CD4-positive, alpha-beta T cell (primary cell): ENCODE measurements at regions of chr17 and their contacts with region 1.

Region 1: GRCh38 chr17:2786176-2786881 is 9.9 kb upstream of the RAP1GAP2 start:
- DNase-seq: peak; percentile 81 to 95 (median 88)
- ATAC-seq: peak; percentile 98
- H3K4me3 ChIP-seq: no peak overlapping the region
- H3K4me3 Mint-ChIP-seq: no peak overlapping the region
- H3K27ac ChIP-seq: no peak overlapping the region
- H3K27ac Mint-ChIP-seq: no peak overlapping the region
- H3K4me1 ChIP-seq: peaks cover 26% of the 10 kb centered on the region
- H3K4me1 Mint-ChIP-seq: peaks cover 23% of the 10 kb centered on the region
- H3K27me3 ChIP-seq: no peaks in the 10 kb centered on the region
- H3K27me3 Mint-ChIP-seq: no peaks in the 10 kb centered on the region
- CTCF ChIP-seq: peak; percentile 88

Region 2: DNA sequence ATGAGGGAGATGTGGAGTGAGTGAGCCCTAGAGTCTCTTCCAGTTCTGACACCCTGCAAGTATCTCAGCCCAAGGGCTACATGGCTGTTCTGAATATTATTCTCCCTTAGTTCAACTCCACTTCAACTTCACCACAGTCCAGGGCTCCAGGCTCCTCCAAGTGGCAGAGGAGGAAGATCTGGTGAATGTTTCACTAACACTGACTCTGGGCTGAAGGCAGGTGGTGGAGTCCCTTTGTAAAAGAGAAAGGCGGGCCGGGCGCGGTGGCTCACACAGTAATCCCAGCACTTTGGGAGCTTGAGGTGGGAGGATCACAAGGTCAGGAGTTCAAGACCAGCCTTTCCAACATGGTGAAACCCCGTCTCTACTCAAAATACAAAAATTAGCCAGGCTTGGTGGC is 50.4 kb before region 1 on chr17:
- CTCF ChIA-PET with region 1: no interaction called
- POLR2A ChIA-PET with region 1: no interaction called
- intact Hi-C with region 1: no loop called
- DNase-seq: no peak
- ATAC-seq: no peak
- H3K4me3 ChIP-seq: no peak overlapping the region
- H3K4me3 Mint-ChIP-seq: no peak overlapping the region
- H3K27ac ChIP-seq: no peak overlapping the region
- H3K27ac Mint-ChIP-seq: no peak overlapping the region
- H3K4me1 ChIP-seq: no peaks in the 10 kb centered on the region
- H3K4me1 Mint-ChIP-seq: no peaks in the 10 kb centered on the region
- H3K27me3 ChIP-seq: peaks cover 0 to 3% of the 10 kb centered on the region in 2 experiments
- H3K27me3 Mint-ChIP-seq: peaks cover 5% of the 10 kb centered on the region
- CTCF ChIP-seq: no peak

Region 3: GRCh38 chr17:2809337-2809736 is 23.0 kb after region 1 on chr17:
- CTCF ChIA-PET with region 1: interaction called, 45 read pairs
- POLR2A ChIA-PET with region 1: interaction called, 213 read pairs
- intact Hi-C with region 1: loop called (anchors 2 kb)
- DNase-seq: no peak
- ATAC-seq: no peak
- H3K4me3 ChIP-seq: no peak overlapping the region
- H3K4me3 Mint-ChIP-seq: no peak overlapping the region
- H3K27ac ChIP-seq: no peak overlapping the region
- H3K27ac Mint-ChIP-seq: no peak overlapping the region
- H3K4me1 ChIP-seq: peaks cover 33% of the 10 kb centered on the region
- H3K4me1 Mint-ChIP-seq: peaks cover 27% of the 10 kb centered on the region
- H3K27me3 ChIP-seq: no peaks in the 10 kb centered on the region
- H3K27me3 Mint-ChIP-seq: no peaks in the 10 kb centered on the region
- CTCF ChIP-seq: no peak

Region 4: DNA sequence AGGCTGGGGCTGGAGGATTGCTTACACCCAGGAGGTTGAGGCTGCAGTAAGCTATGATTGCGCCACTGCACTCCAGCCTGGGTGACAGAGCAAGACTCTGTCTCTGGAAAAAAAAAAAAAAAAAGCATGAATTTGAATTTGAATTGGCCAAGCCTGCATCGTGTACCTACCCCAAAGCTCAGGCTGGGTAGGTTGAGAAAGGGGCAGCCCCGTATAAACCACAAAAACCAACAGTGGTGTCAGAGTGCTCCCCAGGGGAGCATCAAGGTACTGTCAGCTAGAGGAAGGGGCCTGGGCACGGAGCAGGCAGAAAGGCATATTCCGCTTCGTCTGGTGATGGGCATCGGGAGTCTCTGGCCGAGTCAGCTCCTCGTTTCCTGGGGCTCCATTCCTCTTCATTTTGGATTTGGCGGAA is 50.8 kb after region 1 on chr17:
- CTCF ChIA-PET with region 1: interaction called, 61 read pairs
- POLR2A ChIA-PET with region 1: interaction called, 9 read pairs
- intact Hi-C with region 1: loop called (anchors 1 to 2 kb)
- DNase-seq: peak in 11 of 14 experiments; percentile 14 to 78 (median 43)
- ATAC-seq: peak; percentile 98
- H3K4me3 ChIP-seq: no peak overlapping the region
- H3K4me3 Mint-ChIP-seq: no peak overlapping the region
- H3K27ac ChIP-seq: no peak overlapping the region
- H3K27ac Mint-ChIP-seq: no peak overlapping the region
- H3K4me1 ChIP-seq: peaks cover 7% of the 10 kb centered on the region
- H3K4me1 Mint-ChIP-seq: peaks cover 5% of the 10 kb centered on the region
- H3K27me3 ChIP-seq: no peaks in the 10 kb centered on the region
- H3K27me3 Mint-ChIP-seq: no peaks in the 10 kb centered on the region
- CTCF ChIP-seq: peak; percentile 40

Region 5: GRCh38 chr17:2874189-2874686 is 87.9 kb after region 1 on chr17:
- CTCF ChIA-PET with region 1: no interaction called
- POLR2A ChIA-PET with region 1: no interaction called
- intact Hi-C with region 1: no loop called
- DNase-seq: no peak
- ATAC-seq: no peak
- H3K4me3 ChIP-seq: no peak overlapping the region
- H3K4me3 Mint-ChIP-seq: no peak overlapping the region
- H3K27ac ChIP-seq: no peak overlapping the region
- H3K27ac Mint-ChIP-seq: no peak overlapping the region
- H3K4me1 ChIP-seq: peaks cover 7% of the 10 kb centered on the region
- H3K4me1 Mint-ChIP-seq: peaks cover 6% of the 10 kb centered on the region
- H3K27me3 ChIP-seq: no peaks in the 10 kb centered on the region
- H3K27me3 Mint-ChIP-seq: no peaks in the 10 kb centered on the region
- CTCF ChIP-seq: no peak

Region 6: GRCh38 chr17:2929881-2930533 is 143.7 kb after region 1 on chr17:
- CTCF ChIA-PET with region 1: interaction called, 3 read pairs
- POLR2A ChIA-PET with region 1: interaction called, 3 read pairs
- intact Hi-C with region 1: loop called (anchors 1 to 5 kb)
- DNase-seq: peak in 6 of 14 experiments; percentile 9 to 49 (median 36)
- ATAC-seq: no peak
- H3K4me3 ChIP-seq: no peak overlapping the region
- H3K4me3 Mint-ChIP-seq: no peak overlapping the region
- H3K27ac ChIP-seq: no peak overlapping the region
- H3K27ac Mint-ChIP-seq: no peak overlapping the region
- H3K4me1 ChIP-seq: peaks cover 20% of the 10 kb centered on the region
- H3K4me1 Mint-ChIP-seq: peaks cover 19% of the 10 kb centered on the region
- H3K27me3 ChIP-seq: no peaks in the 10 kb centered on the region
- H3K27me3 Mint-ChIP-seq: no peaks in the 10 kb centered on the region
- CTCF ChIP-seq: peak; percentile 75